Body of pancreas (tissue), 4 donors: ENCODE measurements at regions of chr11 and their contacts with region 1.

Region 1: DNA sequence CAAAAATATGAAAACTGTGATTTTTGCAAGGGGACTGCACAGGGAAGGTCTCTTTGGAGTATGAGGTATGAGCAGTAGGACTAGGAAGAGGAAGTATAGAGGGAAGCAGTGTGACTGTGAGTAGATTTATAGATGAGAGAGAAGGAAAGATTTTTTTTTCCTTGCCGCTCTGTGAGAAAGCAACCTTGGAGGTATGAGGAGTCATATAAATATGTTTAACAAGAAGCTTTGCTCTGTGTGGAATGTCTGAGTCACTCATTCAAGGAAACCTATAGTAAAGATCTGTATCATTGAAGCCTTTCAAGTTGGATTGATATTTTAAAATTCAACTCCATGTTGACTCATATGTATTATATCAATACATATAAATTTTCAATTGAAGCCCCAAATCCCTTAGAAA is 26.2 kb downstream of the DNHD1 start:
- DNase-seq: no peak
- ATAC-seq: no peak
- H3K4me3 ChIP-seq: no peak overlapping the region
- H3K27ac ChIP-seq: no peak overlapping the region
- H3K4me1 ChIP-seq: no peaks in the 10 kb centered on the region
- H3K27me3 ChIP-seq: no peaks in the 10 kb centered on the region
- CTCF ChIP-seq: no peak
- POLR2A ChIP-seq: no peak

Region 2: GRCh38 chr11:5983443-5983842 is 539.8 kb before region 1 on chr11:
- intact Hi-C with region 1: no loop called
- DNase-seq: no peak
- ATAC-seq: no peak
- H3K4me3 ChIP-seq: no peak overlapping the region
- H3K27ac ChIP-seq: no peak overlapping the region
- H3K4me1 ChIP-seq: no peaks in the 10 kb centered on the region
- H3K27me3 ChIP-seq: no peaks in the 10 kb centered on the region
- CTCF ChIP-seq: no peak
- POLR2A ChIP-seq: no peak

Region 3: DNA sequence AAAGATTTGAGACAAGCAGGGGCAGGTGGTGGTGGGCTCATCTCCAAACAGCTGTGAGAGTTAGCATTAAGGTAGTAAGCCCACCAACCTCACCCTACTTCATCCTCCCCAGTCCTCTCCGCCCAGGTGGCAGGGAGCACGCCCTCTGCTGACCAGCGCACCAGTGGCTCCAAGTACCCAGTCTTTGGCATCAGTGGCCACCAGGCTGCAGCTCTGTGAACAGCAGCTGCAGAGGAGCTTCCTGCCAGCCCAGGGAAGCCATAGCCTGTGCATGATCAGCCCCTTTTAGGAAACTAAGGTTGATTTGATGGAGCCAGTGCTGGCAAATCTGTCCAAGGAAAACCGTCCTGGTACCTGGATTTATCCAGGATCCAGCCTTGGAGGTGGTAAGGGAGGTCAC is 224.6 kb before region 1 on chr11:
- intact Hi-C with region 1: no loop called
- DNase-seq: peak; percentile 75 to 85 (median 80)
- ATAC-seq: peak; percentile 95
- H3K4me3 ChIP-seq: no peak overlapping the region
- H3K27ac ChIP-seq: no peak overlapping the region
- H3K4me1 ChIP-seq: no peaks in the 10 kb centered on the region
- H3K27me3 ChIP-seq: no peaks in the 10 kb centered on the region
- CTCF ChIP-seq: peak; percentile 63 to 98 (median 91)
- POLR2A ChIP-seq: no peak

Region 4: DNA sequence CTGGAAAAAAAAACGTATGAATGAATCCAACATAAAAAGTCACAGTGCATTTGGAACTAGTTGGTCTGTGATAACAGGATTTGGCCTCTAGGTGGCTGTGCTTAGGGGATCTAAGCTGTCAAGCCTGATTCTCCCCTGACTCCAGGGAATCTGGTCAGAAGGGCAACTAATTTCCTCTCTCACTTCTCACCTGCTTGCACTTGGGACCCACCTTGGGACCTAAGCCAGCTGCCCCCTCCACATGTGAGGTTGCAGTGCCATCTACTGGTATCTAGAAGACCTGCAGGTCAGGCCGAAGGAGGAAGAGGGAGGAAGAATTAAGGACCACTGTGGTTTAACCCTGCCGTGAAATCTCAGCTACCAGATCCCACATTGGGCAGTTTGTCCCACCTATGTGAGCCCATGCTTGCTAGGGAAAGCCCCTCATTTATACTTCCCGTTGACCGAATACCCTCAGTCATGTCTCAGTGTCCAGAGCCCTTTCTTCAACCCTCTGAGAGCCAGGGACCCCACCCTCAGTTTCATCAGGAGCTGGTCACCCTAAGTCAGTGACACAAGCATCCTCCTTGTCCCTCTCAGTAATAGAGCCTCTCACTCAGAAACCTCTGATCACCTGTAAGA is 169.8 kb before region 1 on chr11:
- intact Hi-C with region 1: no loop called
- DNase-seq: peak; percentile 71 to 89 (median 84)
- ATAC-seq: peak; percentile 78
- H3K4me3 ChIP-seq: no peak overlapping the region
- H3K27ac ChIP-seq: peak overlapping the region in 1 of 4 donors; percentile 23
- H3K4me1 ChIP-seq: peaks cover 30% of the 10 kb centered on the region
- H3K27me3 ChIP-seq: no peaks in the 10 kb centered on the region
- CTCF ChIP-seq: peak; percentile 91 to 99 (median 95)
- POLR2A ChIP-seq: no peak

Region 5: DNA sequence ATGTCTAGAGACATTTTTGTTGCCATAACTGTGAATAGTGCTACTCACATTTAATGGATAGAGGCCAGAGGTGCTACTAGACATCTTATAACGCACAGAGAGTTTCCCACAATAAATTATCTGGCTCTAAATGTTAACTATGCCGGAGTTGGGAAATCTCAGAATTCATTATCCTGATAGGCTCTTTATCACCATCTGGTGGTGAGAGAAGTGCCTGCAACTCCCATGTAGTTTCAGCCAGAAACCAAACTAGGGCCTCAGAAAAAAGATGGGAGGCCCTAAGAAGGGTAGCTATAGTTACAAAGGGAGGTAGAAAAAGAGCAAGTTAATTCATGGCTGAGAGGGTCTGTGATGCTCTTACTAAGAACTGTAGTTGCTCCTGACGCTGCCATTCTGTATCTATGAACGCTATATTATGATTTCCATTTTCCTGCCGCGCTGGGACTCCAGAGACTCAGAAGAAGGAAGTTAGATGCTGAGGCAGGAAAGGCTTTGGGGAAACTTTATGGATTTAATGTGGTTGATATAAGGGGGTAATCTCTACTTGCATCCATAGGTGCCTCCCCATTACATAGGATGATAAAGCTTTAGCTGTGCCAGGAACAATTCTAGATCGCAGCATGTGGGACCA is 182.8 kb after region 1 on chr11:
- intact Hi-C with region 1: loop called (anchors 10 kb)
- DNase-seq: peak; percentile 50 to 74 (median 63)
- ATAC-seq: peak; percentile 66
- H3K4me3 ChIP-seq: no peak overlapping the region
- H3K27ac ChIP-seq: no peak overlapping the region
- H3K4me1 ChIP-seq: peaks cover 14% of the 10 kb centered on the region
- H3K27me3 ChIP-seq: no peaks in the 10 kb centered on the region
- CTCF ChIP-seq: peak; percentile 75 to 91 (median 83)
- POLR2A ChIP-seq: no peak

Region 6: DNA sequence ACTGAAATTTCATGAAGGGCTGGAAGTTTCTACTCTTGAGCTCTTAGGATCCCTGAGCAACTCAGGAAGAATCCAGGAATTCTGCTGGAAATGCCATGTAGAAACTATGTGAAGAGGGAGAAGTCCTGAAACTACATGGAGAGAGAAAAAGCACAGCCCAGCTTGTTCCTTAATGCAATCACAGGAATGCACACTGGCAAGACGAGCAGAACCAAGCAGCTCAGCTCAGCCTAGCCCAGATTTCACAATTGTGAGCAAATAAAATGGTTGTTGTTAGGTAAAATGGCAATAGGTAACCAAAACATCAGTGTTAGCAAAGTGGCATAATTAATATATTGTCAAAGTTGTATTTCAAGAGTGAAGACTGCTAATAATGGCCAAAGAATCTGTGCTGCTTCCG is 468.8 kb after region 1 on chr11:
- intact Hi-C with region 1: no loop called
- DNase-seq: no peak
- ATAC-seq: no peak
- H3K4me3 ChIP-seq: no peak overlapping the region
- H3K27ac ChIP-seq: no peak overlapping the region
- H3K4me1 ChIP-seq: no peaks in the 10 kb centered on the region
- H3K27me3 ChIP-seq: no peaks in the 10 kb centered on the region
- CTCF ChIP-seq: no peak
- POLR2A ChIP-seq: no peak